Heart right ventricle (tissue), 16 donors: ENCODE measurements at regions of chr18 and their contacts with region 1.

Region 1: GRCh38 chr18:27175914-27176313 is 9.2 kb downstream of the CHST9 start:
- DNase-seq: no peak
- ATAC-seq: no peak
- H3K4me3 ChIP-seq: no peak overlapping the region
- H3K27ac ChIP-seq: no peak overlapping the region
- H3K4me1 ChIP-seq: no peaks in the 10 kb centered on the region
- H3K27me3 ChIP-seq: no peaks in the 10 kb centered on the region
- CTCF ChIP-seq: no peak

Region 2: GRCh38 chr18:27049969-27050368 is 125.9 kb before region 1 on chr18:
- intact Hi-C with region 1: loop called in 1 of 10 experiments (anchors 10 kb)
- DNase-seq: no peak
- ATAC-seq: peak in 5 of 8 donors; percentile 34 to 61 (median 41)
- H3K4me3 ChIP-seq: no peak overlapping the region
- H3K27ac ChIP-seq: peak overlapping the region in 1 of 10 donors; percentile 13
- H3K4me1 ChIP-seq: peaks cover 0 to 4% (median 0%) of the 10 kb centered on the region in 9 donors
- H3K27me3 ChIP-seq: no peaks in the 10 kb centered on the region
- CTCF ChIP-seq: no peak

Region 3: GRCh38 chr18:27110319-27110718 is 65.6 kb before region 1 on chr18:
- intact Hi-C with region 1: loop called in 1 of 10 experiments (anchors 10 kb)
- DNase-seq: no peak
- ATAC-seq: no peak
- H3K4me3 ChIP-seq: no peak overlapping the region
- H3K27ac ChIP-seq: no peak overlapping the region
- H3K4me1 ChIP-seq: no peaks in the 10 kb centered on the region
- H3K27me3 ChIP-seq: no peaks in the 10 kb centered on the region
- CTCF ChIP-seq: no peak